ENCODE measurements at regions of chr11 and their contacts with region 1.

Region 1: GRCh38 chr11:118870396-118871345 is 13.0 kb upstream of the CXCR5 start:
- DNase-seq: peak; percentile 90
- H3K4me3 ChIP-seq: peak overlapping the region; percentile 68
- H3K27ac ChIP-seq: peak overlapping the region; percentile 95
- H3K4me1 ChIP-seq: peaks cover 71% of the 10 kb centered on the region
- CTCF ChIP-seq: peak; percentile 38; the same call in 1 of the 2 replicates

Region 2: DNA sequence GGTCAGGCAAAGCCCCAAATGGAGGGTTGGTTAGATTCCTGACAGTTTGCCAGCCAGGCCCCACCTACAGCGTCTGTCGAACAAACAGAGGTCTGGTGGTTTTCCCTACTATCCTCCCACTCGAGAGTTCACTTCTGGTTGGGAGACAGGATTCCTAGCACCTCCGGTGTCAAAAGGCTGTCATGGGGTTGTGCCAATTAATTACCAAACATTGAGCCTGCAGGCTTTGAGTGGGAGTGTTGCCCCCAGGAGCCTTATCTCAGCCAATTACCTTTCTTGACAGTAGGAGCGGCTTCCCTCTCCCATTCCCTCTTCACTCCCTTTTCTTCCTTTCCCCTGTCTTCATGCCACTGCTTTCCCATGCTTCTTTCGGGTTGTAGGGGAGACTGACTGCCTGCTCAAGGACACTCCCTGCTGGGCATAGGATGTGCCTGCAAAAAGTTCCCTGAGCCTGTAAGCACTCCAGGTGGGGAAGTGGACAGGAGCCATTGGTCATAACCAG is 348.0 kb before region 1 on chr11:
- CTCF ChIA-PET with region 1: no interaction called
- POLR2A ChIA-PET with region 1: no interaction called
- intact Hi-C with region 1: no loop called
- DNase-seq: no peak
- H3K4me3 ChIP-seq: no peak overlapping the region
- H3K27ac ChIP-seq: no peak overlapping the region
- H3K4me1 ChIP-seq: no peaks in the 10 kb centered on the region
- CTCF ChIP-seq: peak; percentile 58

Region 3: GRCh38 chr11:118820412-118821357 is 50.0 kb before region 1 on chr11:
- CTCF ChIA-PET with region 1: interaction called, 4 read pairs
- POLR2A ChIA-PET with region 1: interaction called, 34 read pairs
- intact Hi-C with region 1: loop called (anchors 2 kb)
- DNase-seq: peak; percentile 91
- H3K4me3 ChIP-seq: peak overlapping the region; percentile 61
- H3K27ac ChIP-seq: peak overlapping the region; percentile 80
- H3K4me1 ChIP-seq: peaks cover 61% of the 10 kb centered on the region
- CTCF ChIP-seq: no peak

Region 4: GRCh38 chr11:118838905-118839553 is 31.6 kb before region 1 on chr11:
- CTCF ChIA-PET with region 1: no interaction called
- POLR2A ChIA-PET with region 1: interaction called, 4 read pairs
- intact Hi-C with region 1: loop called (anchors 2 kb)
- DNase-seq: peak; percentile 72
- H3K4me3 ChIP-seq: no peak overlapping the region
- H3K27ac ChIP-seq: peak overlapping the region; percentile 57
- H3K4me1 ChIP-seq: peaks cover 53% of the 10 kb centered on the region
- CTCF ChIP-seq: no peak

Region 5: DNA sequence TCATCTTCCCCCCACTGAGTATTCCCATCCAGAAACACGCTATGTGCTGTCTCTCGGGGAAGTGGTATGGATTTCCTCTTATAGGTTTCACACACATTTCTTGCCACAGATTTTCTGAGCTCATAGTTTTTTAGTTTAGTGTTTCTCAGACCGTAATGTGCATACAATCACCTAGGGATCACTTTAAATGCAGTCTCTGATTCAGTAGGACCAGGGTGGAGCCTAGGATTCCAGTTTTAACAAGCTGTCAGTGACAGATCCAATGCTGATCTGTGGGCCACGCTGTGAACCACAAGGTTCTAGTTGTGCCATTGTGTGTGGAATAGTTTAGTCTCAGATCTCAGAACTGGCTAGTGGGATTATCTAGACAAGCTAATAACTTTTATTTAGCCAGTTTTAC is 10.7 kb before region 1 on chr11:
- CTCF ChIA-PET with region 1: interaction called, 4 read pairs
- POLR2A ChIA-PET with region 1: interaction called, 46 read pairs
- intact Hi-C with region 1: no loop called
- DNase-seq: no peak
- H3K4me3 ChIP-seq: no peak overlapping the region
- H3K27ac ChIP-seq: peak overlapping the region; percentile 40
- H3K4me1 ChIP-seq: peaks cover 49% of the 10 kb centered on the region
- CTCF ChIP-seq: no peak

Region 6: DNA sequence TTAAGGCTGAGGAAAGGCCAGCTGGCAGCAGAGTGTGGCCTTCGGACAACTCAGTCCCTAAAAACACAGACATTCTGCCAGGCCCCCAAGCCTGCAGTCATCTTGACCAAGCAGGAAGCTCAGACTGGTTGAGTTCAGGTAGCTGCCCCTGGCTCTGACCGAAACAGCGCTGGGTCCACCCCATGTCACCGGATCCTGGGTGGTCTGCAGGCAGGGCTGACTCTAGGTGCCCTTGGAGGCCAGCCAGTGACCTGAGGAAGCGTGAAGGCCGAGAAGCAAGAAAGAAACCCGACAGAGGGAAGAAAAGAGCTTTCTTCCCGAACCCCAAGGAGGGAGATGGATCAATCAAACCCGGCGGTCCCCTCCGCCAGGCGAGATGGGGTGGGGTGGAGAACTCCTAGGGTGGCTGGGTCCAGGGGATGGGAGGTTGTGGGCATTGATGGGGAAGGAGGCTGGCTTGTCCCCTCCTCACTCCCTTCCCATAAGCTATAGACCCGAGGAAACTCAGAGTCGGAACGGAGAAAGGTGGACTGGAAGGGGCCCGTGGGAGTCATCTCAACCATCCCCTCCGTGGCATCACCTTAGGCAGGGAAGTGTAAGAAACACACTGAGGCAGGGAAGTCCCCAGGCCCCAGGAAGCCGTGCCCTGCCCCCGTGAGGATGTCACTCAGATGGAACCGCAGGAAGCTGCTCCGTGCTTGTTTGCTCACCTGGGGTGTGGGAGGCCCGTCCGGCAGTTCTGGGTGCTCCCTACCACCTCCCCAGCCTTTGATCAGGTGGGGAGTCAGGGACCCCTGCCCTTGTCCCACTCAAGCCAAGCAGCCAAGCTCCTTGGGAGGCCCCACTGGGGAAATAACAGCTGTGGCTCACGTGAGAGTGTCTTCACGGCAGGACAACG is 24.7 kb after region 1 on chr11:
- CTCF ChIA-PET with region 1: interaction called, 8 read pairs
- POLR2A ChIA-PET with region 1: interaction called, 31 read pairs
- intact Hi-C with region 1: loop called (anchors 1 kb)
- DNase-seq: peak; percentile 90
- H3K4me3 ChIP-seq: peak overlapping the region; percentile 57
- H3K27ac ChIP-seq: peak overlapping the region; percentile 91
- H3K4me1 ChIP-seq: peaks cover 83% of the 10 kb centered on the region
- CTCF ChIP-seq: peak; percentile 45

Region 7: GRCh38 chr11:119134389-119134978 is 263.8 kb after region 1 on chr11:
- CTCF ChIA-PET with region 1: no interaction called
- POLR2A ChIA-PET with region 1: no interaction called
- intact Hi-C with region 1: no loop called
- DNase-seq: peak; percentile 13
- H3K4me3 ChIP-seq: no peak overlapping the region
- H3K27ac ChIP-seq: no peak overlapping the region
- H3K4me1 ChIP-seq: no peaks in the 10 kb centered on the region
- CTCF ChIP-seq: peak; percentile 77

Region 8: DNA sequence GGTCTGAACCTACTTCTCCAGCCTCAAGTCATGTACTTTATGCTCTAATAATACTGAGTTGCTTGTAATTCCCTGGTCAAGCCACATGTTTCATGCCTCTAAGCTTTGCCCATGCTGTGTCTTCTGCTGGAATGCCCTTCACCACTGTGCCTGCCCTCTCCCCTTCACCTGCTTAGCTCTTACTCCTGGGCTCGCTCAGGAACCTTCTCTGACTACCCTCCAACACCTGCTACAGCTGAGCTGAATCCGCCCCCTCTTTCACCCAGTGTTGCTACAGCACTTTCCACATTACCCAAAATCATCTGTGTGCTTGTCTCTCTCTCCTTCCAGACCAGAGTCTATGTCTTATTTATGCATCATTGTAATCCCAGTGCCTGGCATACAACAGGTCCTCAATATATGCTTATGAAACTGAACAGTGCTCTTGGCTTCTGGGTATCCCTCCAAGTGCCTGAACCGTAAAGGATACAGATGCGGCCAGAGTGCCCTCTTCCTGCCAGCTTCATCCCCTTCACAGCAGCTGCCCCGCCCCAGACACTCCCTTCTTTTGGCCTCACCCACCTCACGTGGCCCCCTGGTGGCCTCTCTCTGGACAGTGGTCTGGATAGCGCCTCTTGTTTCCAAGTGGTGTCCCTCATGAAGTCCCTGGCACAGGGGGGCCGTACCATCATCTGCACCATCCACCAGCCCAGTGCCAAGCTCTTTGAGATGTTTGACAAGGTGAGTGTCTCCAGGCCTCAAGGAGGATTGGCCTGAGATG is 285.2 kb after region 1 on chr11:
- CTCF ChIA-PET with region 1: no interaction called
- POLR2A ChIA-PET with region 1: no interaction called
- intact Hi-C with region 1: no loop called
- DNase-seq: peak; percentile 45
- H3K4me3 ChIP-seq: no peak overlapping the region
- H3K27ac ChIP-seq: no peak overlapping the region
- H3K4me1 ChIP-seq: peaks cover 5% of the 10 kb centered on the region
- CTCF ChIP-seq: peak; percentile 50

Region 9: DNA sequence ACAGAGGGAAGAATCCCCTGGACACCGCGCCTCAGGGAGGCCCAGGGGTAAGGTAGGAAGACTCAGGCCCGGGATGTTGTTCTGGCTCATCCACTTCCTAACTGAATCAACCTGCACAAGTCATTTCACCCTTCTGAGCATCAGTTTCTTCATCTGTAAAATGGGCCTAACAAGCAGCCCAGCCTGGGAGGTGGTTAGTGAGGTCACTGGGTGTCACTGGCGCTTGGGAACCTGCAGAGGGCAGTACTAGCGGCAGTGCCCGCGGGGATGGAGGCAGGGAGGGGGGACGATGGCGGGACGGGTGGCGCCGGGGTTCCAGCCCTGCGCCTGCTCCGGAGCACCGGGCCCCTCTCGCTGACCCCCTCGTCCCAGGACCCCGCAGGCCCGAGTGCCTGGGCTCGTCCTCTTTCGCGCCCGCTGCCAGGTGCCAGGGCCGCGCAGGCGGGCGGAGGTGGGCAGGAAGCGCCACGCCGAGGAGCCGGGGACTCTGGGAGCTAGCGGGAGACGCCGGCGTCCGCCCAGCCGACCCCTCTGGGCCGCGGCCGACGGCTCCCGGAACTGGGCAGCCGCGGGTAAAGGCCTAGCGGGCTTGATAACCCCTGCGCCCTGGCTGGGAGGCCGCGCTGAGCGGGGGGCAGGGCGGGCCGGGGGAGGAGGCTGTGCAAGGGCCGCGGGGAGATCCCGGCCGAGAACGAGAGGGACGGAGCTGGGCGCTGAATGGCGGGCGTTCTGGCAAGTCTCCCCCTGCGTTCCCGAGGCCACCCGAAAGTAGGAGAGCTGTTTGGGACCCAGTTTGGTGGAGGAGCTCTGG is 298.0 kb after region 1 on chr11 and contains the start of gene NLRX1:
- CTCF ChIA-PET with region 1: no interaction called
- POLR2A ChIA-PET with region 1: no interaction called
- intact Hi-C with region 1: no loop called
- DNase-seq: peak; percentile 85
- H3K4me3 ChIP-seq: peak within 1 kb of the TSS; percentile 68
- H3K27ac ChIP-seq: no peak within 1 kb of the TSS
- H3K4me1 ChIP-seq: peaks cover 11% of the 10 kb centered on the region
- CTCF ChIP-seq: peak; percentile 87
- total RNA-seq, gene NLRX1: 2.1 and 2.8 TPM in 2 replicates